Naive thymus-derived CD4-positive, alpha-beta T cell (primary cell): ENCODE measurements at regions of chr14 and their contacts with region 1.

Region 1: GRCh38 chr14:95534299-95535225 is at the start of gene GLRX5:
- DNase-seq: peak; percentile 88 to 100 (median 99)
- ATAC-seq: peak; percentile 92
- H3K4me3 ChIP-seq: peak within 1 kb of the TSS; percentile 77
- H3K4me3 Mint-ChIP-seq: peak within 1 kb of the TSS; percentile 90 to 99 (median 94)
- H3K27ac ChIP-seq: peak within 1 kb of the TSS; percentile 83
- H3K27ac Mint-ChIP-seq: peak within 1 kb of the TSS; percentile 71 to 99 (median 97)
- H3K4me1 ChIP-seq: peaks cover 25 to 27% of the 10 kb centered on the region in 2 donors
- H3K4me1 Mint-ChIP-seq: peaks cover 35 to 92% (median 75%) of the 10 kb centered on the region in 7 donors
- H3K27me3 ChIP-seq: no peaks in the 10 kb centered on the region
- H3K27me3 Mint-ChIP-seq: no peaks in the 10 kb centered on the region
- total RNA-seq, gene GLRX5: 12.3 to 31.6 (median 19.8) TPM

Region 2: GRCh38 chr14:95157327-95158189 is 377.0 kb before region 1 on chr14 and contains the start of gene DICER1:
- CTCF ChIA-PET with region 1: no interaction called
- POLR2A ChIA-PET with region 1: no interaction called
- intact Hi-C with region 1: loop called (anchors 1 kb)
- DNase-seq: peak; percentile 84 to 98 (median 93)
- ATAC-seq: peak; percentile 92
- H3K4me3 ChIP-seq: peak within 1 kb of the TSS; percentile 87
- H3K4me3 Mint-ChIP-seq: peak within 1 kb of the TSS; percentile 94 to 99 (median 98)
- H3K27ac ChIP-seq: peak within 1 kb of the TSS; percentile 82
- H3K27ac Mint-ChIP-seq: peak within 1 kb of the TSS; percentile 97 to 100 (median 99)
- H3K4me1 ChIP-seq: peaks cover 31 to 36% of the 10 kb centered on the region in 2 donors
- H3K4me1 Mint-ChIP-seq: peaks cover 32 to 55% (median 42%) of the 10 kb centered on the region in 7 donors
- H3K27me3 ChIP-seq: no peaks in the 10 kb centered on the region
- H3K27me3 Mint-ChIP-seq: no peaks in the 10 kb centered on the region
- total RNA-seq, gene DICER1: 61.1 to 78.2 (median 67.4) TPM

Region 3: GRCh38 chr14:95442633-95443021 is 91.9 kb before region 1 on chr14:
- CTCF ChIA-PET with region 1: interaction called, 209 read pairs
- POLR2A ChIA-PET with region 1: interaction called, 8 read pairs
- intact Hi-C with region 1: loop called (anchors 2 kb)
- DNase-seq: peak; percentile 51 to 76 (median 68)
- ATAC-seq: peak; percentile 94
- H3K4me3 ChIP-seq: no peak overlapping the region
- H3K4me3 Mint-ChIP-seq: no peak overlapping the region
- H3K27ac ChIP-seq: no peak overlapping the region
- H3K27ac Mint-ChIP-seq: peak overlapping the region; percentile 3 to 77 (median 57)
- H3K4me1 ChIP-seq: no peaks in the 10 kb centered on the region
- H3K4me1 Mint-ChIP-seq: peaks cover 4 to 15% (median 5%) of the 10 kb centered on the region in 7 donors
- H3K27me3 ChIP-seq: no peaks in the 10 kb centered on the region
- H3K27me3 Mint-ChIP-seq: no peaks in the 10 kb centered on the region

Region 4: DNA sequence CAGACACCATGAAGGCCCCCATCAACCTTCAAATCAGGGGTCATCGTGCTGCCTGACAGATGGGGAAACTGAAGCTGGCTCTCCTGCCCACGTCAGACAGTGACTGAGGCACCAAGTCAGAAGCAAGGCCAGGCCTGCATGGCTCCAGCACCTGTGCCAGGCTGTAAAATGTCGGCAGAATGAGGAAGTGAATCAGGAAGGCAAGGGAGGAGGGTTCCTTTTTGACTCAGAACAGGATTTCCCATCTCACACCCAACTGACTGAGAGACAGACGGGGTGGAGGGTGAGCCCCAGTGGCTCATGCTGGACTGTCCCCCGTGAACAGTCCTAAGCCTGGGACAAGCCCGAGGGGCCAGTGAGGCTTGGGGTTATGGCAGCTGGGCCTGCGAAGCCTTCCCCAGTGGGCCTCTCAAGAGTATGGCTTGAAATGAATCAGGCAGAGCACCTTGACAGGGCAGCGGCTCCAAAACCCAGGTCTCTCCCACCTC is 39.0 kb before region 1 on chr14:
- CTCF ChIA-PET with region 1: no interaction called
- POLR2A ChIA-PET with region 1: no interaction called
- intact Hi-C with region 1: loop called in 1 of 2 experiments (anchors 5 kb)
- DNase-seq: no peak
- ATAC-seq: peak; percentile 81
- H3K4me3 ChIP-seq: peak overlapping the region; percentile 5
- H3K4me3 Mint-ChIP-seq: peak overlapping the region in 7 of 10 donors; percentile 33 to 55 (median 46)
- H3K27ac ChIP-seq: peak overlapping the region; percentile 39
- H3K27ac Mint-ChIP-seq: peak overlapping the region; percentile 72 to 90 (median 84)
- H3K4me1 ChIP-seq: peaks cover 18 to 22% of the 10 kb centered on the region in 2 donors
- H3K4me1 Mint-ChIP-seq: peaks cover 54 to 72% (median 66%) of the 10 kb centered on the region in 7 donors
- H3K27me3 ChIP-seq: no peaks in the 10 kb centered on the region
- H3K27me3 Mint-ChIP-seq: no peaks in the 10 kb centered on the region

Region 5: DNA sequence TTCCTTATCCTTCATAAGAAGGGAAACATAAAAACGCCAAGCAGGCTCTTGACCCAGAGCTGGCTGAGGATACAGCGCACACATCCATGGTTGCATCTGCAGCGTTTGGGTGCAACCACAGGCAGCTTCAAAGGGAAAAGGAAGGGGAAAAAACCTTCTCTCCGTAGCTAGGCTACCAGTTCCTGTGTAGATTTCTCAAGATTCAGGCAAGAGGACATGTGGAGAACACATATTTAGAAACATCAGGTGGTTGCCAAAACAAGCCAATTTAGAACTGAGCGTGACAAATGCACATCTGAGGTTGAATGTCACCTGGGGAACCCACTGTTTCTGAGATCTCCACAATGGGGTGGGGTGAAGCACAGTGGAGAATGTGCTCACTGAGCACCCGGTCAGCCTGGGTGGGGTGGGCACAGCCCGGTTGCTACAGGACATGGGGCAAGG is 591.8 kb after region 1 on chr14:
- CTCF ChIA-PET with region 1: no interaction called
- POLR2A ChIA-PET with region 1: no interaction called
- intact Hi-C with region 1: no loop called
- DNase-seq: peak in 8 of 9 donors; percentile 33 to 92 (median 82)
- ATAC-seq: peak; percentile 93
- H3K4me3 ChIP-seq: peak overlapping the region; percentile 5
- H3K4me3 Mint-ChIP-seq: peak overlapping the region; percentile 60 to 92 (median 80)
- H3K27ac ChIP-seq: peak overlapping the region; percentile 80
- H3K27ac Mint-ChIP-seq: peak overlapping the region; percentile 96 to 100 (median 99)
- H3K4me1 ChIP-seq: peaks cover 15 to 32% of the 10 kb centered on the region in 2 donors
- H3K4me1 Mint-ChIP-seq: peaks cover 11 to 58% (median 49%) of the 10 kb centered on the region in 7 donors
- H3K27me3 ChIP-seq: no peaks in the 10 kb centered on the region
- H3K27me3 Mint-ChIP-seq: no peaks in the 10 kb centered on the region

Region 6: DNA sequence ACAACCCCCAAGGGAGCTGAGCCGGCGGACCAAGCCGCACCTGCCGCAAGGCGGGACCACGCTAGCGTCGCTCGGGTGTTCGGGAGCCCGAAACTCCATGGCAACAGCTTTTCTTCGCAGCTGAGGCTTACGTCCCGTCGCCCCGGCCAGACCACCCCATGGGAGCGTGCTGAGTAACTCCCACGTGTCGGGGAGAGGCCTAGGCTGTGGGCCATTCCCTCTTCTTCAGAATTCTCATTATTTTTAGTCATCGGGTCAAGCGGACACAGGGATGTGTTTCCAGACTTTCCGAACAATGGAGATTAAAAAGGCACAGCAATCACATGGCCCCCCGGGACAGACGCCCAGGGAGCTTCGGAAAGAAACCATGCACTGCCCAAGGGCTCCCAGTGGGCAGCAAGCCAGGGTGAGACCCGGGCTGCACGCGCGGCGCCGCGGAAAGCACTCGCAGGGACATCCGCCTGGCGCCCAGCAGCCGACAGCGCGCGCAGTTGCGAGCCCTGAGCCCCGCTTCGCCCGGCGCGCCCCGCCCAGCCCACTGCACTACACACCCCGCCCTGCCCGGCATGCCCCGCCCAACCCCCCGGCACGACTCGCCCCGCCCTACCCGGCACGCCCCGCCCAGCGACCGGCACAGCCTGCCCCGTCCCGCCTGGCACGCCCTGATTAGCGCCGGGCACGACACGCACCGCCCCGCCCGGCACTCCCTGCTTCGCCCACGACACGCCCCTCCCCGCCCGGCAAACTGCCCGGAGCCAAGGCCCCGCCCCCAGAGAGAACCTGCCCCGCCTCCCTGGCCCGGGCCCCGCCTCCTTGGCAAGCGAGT is 856.9 kb after region 1 on chr14:
- CTCF ChIA-PET with region 1: no interaction called
- POLR2A ChIA-PET with region 1: no interaction called
- intact Hi-C with region 1: loop called in 1 of 2 experiments (anchors 2 kb)
- DNase-seq: peak; percentile 97 to 100 (median 99)
- ATAC-seq: peak; percentile 97
- H3K4me3 ChIP-seq: peak overlapping the region; percentile 90
- H3K4me3 Mint-ChIP-seq: peak overlapping the region; percentile 85 to 94 (median 92)
- H3K27ac ChIP-seq: peak overlapping the region; percentile 55
- H3K27ac Mint-ChIP-seq: peak overlapping the region in 8 of 9 donors; percentile 61 to 93 (median 86)
- H3K4me1 ChIP-seq: peaks cover 7 to 11% of the 10 kb centered on the region in 2 donors
- H3K4me1 Mint-ChIP-seq: peaks cover 0 to 7% (median 0%) of the 10 kb centered on the region in 7 donors
- H3K27me3 ChIP-seq: no peaks in the 10 kb centered on the region
- H3K27me3 Mint-ChIP-seq: peaks cover 0 to 14% (median 0%) of the 10 kb centered on the region in 5 donors